ENCODE measurements at regions of chr20 and their contacts with region 1.

Region 1: GRCh38 chr20:2651772-2652723 is at the start of gene NOP56:
- DNase-seq: peak; percentile 62 to 97
- H3K4me3 ChIP-seq: peak within 1 kb of the TSS; percentile 94 to 100 (median 98)
- H3K27ac ChIP-seq: peak within 1 kb of the TSS; percentile 96
- H3K4me1 ChIP-seq: peaks cover 0 to 5% (median 3%) of the 10 kb centered on the region in 4 experiments; a peak in 5 of 7 replicates
- H3K27me3 ChIP-seq: no peaks in the 10 kb centered on the region
- CTCF ChIP-seq: no peak
- EP300 ChIP-seq: peak in 1 of 2 experiments; percentile 99; a peak in 2 of 3 replicates
- POLR2A ChIP-seq: peak; percentile 93 to 95
- RAD21 ChIP-seq: no peak
- total RNA-seq, gene NOP56: 668 and 677 TPM in 2 replicates

Region 2: GRCh38 chr20:2470423-2471193 is 181.4 kb before region 1 on chr20 and contains the start of gene SNRPB:
- CTCF ChIA-PET with region 1: interaction called, 3 read pairs
- POLR2A ChIA-PET with region 1: interaction called, 54 read pairs
- DNase-seq: peak; percentile 93 to 96
- H3K4me3 ChIP-seq: peak within 1 kb of the TSS; percentile 91 to 99 (median 98)
- H3K27ac ChIP-seq: peak within 1 kb of the TSS; percentile 98
- H3K4me1 ChIP-seq: peaks cover 0 to 7% (median 2%) of the 10 kb centered on the region in 4 experiments; a peak in 3 of 7 replicates
- H3K27me3 ChIP-seq: no peaks in the 10 kb centered on the region
- CTCF ChIP-seq: no peak
- EP300 ChIP-seq: peak in 1 of 2 experiments; percentile 62; a peak in 1 of 3 replicates
- POLR2A ChIP-seq: peak; percentile 95 to 99
- RAD21 ChIP-seq: no peak
- total RNA-seq, gene SNRPB: 495 and 507 TPM in 2 replicates

Region 3: GRCh38 chr20:2508631-2509467 is 143.2 kb before region 1 on chr20 and contains the start of gene ZNF343:
- CTCF ChIA-PET with region 1: no interaction called
- POLR2A ChIA-PET with region 1: interaction called, 10 read pairs
- DNase-seq: peak; percentile 31 to 77
- H3K4me3 ChIP-seq: peak within 1 kb of the TSS; percentile 66 to 83 (median 80)
- H3K27ac ChIP-seq: peak within 1 kb of the TSS; percentile 63; the same call in 1 of the 2 replicates
- H3K4me1 ChIP-seq: peaks cover 0 to 5% (median 2%) of the 10 kb centered on the region in 4 experiments; a peak in 3 of 7 replicates
- H3K27me3 ChIP-seq: peaks cover 28 to 58% (median 50%) of the 10 kb centered on the region in 4 experiments
- CTCF ChIP-seq: no peak
- EP300 ChIP-seq: no peak
- POLR2A ChIP-seq: no peak
- RAD21 ChIP-seq: no peak
- total RNA-seq, gene ZNF343: 3.7 and 5.0 TPM in 2 replicates

Region 4: DNA sequence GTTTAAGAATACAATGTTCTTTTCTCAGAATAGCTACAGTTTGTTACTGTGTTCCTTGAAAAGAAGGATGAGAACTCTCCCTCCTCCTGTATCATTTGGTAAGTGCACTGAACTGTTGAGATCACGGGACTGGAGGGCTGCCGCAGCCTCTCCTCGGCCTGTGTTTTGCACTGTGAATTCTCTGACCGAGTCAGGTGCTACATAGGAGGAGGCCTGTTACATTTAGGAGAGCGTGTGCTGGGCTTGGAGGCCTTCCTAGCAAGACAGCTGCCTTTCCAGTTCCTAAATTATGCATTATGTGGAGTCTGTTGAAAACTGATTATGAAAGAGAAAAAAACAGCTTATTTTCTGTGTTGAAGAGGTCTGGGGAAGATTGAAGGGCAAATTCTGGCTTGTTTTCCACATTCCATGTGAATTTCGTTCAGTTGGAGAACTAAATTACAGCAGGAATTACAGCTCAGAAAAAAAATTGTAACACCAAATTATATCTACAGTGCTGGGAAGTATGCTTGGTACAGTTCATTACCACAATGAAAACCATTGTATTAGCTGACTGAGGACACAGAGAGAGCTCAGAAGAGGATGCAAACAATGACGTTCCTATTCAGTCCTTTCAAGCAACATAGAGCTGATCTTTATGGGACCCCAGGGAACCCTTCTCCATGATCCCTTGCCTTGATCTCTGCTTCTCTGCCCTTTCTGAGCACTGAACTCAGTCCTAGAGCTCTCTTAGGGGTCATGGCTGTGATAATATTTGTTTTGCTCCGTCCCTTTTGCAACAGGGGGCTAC is 112.9 kb before region 1 on chr20:
- CTCF ChIA-PET with region 1: interaction called, 3 read pairs
- POLR2A ChIA-PET with region 1: interaction called, 10 read pairs
- DNase-seq: no peak
- H3K4me3 ChIP-seq: no peak overlapping the region
- H3K27ac ChIP-seq: no peak overlapping the region
- H3K4me1 ChIP-seq: peaks cover 0 to 9% (median 0%) of the 10 kb centered on the region in 4 experiments; a peak in 2 of 7 replicates
- H3K27me3 ChIP-seq: peaks cover 0 to 3% (median 0%) of the 10 kb centered on the region in 4 experiments; a peak in 1 of 7 replicates
- CTCF ChIP-seq: no peak
- EP300 ChIP-seq: no peak
- POLR2A ChIP-seq: no peak
- RAD21 ChIP-seq: no peak

Region 5: GRCh38 chr20:2637246-2637645 is 14.8 kb before region 1 on chr20:
- CTCF ChIA-PET with region 1: interaction called, 12 read pairs
- POLR2A ChIA-PET with region 1: interaction called, 463 read pairs
- DNase-seq: no peak
- H3K4me3 ChIP-seq: no peak overlapping the region
- H3K27ac ChIP-seq: no peak overlapping the region
- H3K4me1 ChIP-seq: no peaks in the 10 kb centered on the region
- H3K27me3 ChIP-seq: no peaks in the 10 kb centered on the region; a peak in 2 of 7 replicates
- CTCF ChIP-seq: no peak
- EP300 ChIP-seq: no peak
- POLR2A ChIP-seq: no peak
- RAD21 ChIP-seq: no peak

Region 6: GRCh38 chr20:2663887-2664719 is 12.1 kb after region 1 on chr20 and contains the start of gene IDH3B:
- CTCF ChIA-PET with region 1: interaction called, 6 read pairs
- POLR2A ChIA-PET with region 1: interaction called, 463 read pairs
- DNase-seq: peak; percentile 64 to 94
- H3K4me3 ChIP-seq: peak within 1 kb of the TSS; percentile 93 to 96 (median 96)
- H3K27ac ChIP-seq: peak within 1 kb of the TSS; percentile 78
- H3K4me1 ChIP-seq: peaks cover 0 to 4% (median under 1%) of the 10 kb centered on the region in 4 experiments; a peak in 3 of 7 replicates
- H3K27me3 ChIP-seq: no peaks in the 10 kb centered on the region; a peak in 3 of 7 replicates
- CTCF ChIP-seq: no peak
- EP300 ChIP-seq: no peak
- POLR2A ChIP-seq: peak; percentile 88 to 97
- RAD21 ChIP-seq: no peak
- total RNA-seq, gene IDH3B: 103 and 110 TPM in 2 replicates